ENCODE measurements at regions of chr12 and their contacts with region 1.

Region 1: DNA sequence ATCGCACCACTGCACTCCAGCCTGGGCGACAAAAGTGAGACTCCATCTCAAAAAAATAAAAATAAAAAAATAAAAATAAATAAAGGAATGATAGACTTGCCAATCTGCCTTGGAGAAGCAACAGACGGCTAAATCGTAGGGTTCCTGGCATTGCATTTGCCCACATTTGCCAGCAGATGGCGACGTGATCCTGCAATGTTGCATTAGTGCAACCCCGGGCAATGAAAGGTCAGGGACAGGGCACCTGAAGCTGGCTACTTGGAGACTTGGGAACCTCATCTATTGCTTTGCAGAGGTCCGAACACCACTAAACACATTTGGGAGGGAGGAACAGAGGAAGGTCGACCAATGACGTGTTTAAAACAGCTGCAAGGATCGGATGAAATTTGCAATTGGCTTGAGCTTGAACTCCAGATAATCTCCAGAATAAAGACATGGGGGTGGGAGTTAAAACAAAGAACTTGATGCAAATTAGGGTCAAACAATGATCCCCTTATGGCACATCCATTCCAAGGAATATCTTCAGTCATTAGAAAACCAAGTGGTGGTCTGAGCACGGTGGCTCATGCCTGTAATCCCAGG is 34.6 kb downstream of the SPRING1 start:
- DNase-seq: peak; percentile 76
- H3K4me3 Mint-ChIP-seq: no peak overlapping the region
- H3K27ac Mint-ChIP-seq: no peak overlapping the region
- H3K4me1 Mint-ChIP-seq: no peaks in the 10 kb centered on the region
- H3K27me3 Mint-ChIP-seq: peaks cover 12% of the 10 kb centered on the region

Region 2: GRCh38 chr12:116568203-116568602 is 135.1 kb before region 1 on chr12:
- CTCF ChIA-PET with region 1: no interaction called
- DNase-seq: no peak
- H3K4me3 Mint-ChIP-seq: no peak overlapping the region
- H3K27ac Mint-ChIP-seq: no peak overlapping the region
- H3K4me1 Mint-ChIP-seq: no peaks in the 10 kb centered on the region
- H3K27me3 Mint-ChIP-seq: peaks cover 4% of the 10 kb centered on the region

Region 3: DNA sequence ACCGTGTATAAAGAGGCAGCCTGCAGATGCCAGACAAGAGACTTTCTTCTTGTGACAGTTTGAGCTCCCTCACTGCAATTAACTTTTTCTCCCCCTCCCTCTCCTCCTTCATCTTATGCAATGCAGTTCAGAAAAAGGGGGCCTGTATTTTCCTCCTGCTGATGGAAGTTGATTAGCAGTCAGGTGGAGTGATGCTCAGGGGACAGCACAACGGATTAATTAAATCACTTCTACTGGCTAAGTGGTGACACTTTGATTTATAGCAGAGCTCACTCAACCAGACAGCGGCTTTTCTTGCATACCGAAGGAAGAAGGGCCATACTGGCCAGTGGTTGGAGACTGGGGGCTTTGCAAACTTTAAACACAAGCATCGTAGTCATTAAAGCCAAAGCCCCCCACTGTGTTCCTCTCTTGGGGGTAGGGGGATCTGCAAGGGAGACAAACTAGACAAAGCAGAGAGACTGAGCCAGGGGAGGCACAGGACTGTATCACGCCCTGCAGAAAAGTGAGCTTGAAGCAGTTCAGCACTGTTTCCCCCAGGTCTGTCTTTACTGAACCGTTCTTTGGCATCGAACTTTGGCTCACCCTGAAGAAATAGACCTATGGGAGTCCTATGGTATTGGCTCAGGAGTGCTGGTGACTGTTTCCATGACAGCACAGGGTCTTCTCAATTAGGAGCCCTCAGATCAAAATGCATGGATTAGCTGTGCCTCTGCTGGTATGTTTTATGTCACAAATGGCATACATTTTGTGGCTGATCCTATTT is 13.1 kb before region 1 on chr12:
- CTCF ChIA-PET with region 1: interaction called, 10 read pairs
- DNase-seq: no peak
- H3K4me3 Mint-ChIP-seq: no peak overlapping the region
- H3K27ac Mint-ChIP-seq: no peak overlapping the region
- H3K4me1 Mint-ChIP-seq: peaks cover 18% of the 10 kb centered on the region
- H3K27me3 Mint-ChIP-seq: peaks cover 59% of the 10 kb centered on the region

Region 4: DNA sequence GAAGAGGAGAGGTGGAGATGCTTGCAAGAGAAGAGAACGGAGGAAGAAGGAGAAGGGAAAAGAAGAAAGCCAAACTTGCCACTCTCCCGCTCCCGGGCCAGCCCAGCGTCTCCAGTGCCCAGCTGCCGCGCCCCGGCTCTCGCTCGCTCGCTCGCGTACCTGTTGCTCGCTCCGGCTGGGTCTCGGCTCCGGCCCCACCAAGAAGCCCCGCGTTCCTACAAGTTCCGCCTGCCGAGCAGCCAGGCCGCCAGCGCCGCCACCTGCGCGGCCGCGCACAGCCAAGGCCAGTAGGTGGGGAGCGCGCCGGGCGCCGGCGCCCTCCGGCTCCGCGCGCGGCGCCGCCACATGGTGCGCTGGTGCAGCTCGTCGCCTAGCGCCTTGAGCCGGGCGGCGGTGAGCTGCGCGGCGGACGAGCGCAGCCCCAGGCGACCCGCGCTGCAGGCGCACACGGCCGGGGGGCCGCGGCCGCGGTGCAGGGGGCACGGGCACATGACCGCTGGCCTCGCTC is 177.6 kb after region 1 on chr12:
- CTCF ChIA-PET with region 1: interaction called, 17 read pairs
- DNase-seq: peak; percentile 52
- H3K4me3 Mint-ChIP-seq: peak overlapping the region; percentile 70
- H3K27ac Mint-ChIP-seq: no peak overlapping the region
- H3K4me1 Mint-ChIP-seq: peaks cover 35% of the 10 kb centered on the region
- H3K27me3 Mint-ChIP-seq: peaks cover 98% of the 10 kb centered on the region